Activated CD4-positive, alpha-beta memory T cell treated with anti-CD3 and anti-CD28 coated beads, Interleukin-2, amount 10 ng/mL, durations not matched to agents 7 days and 5 days (primary cell): ENCODE measurements at regions of chr19 and their contacts with region 1.

Region 1: GRCh38 chr19:35124098-35125060 is 8.8 kb downstream of the FXYD3 start:
- DNase-seq: peak; percentile 89
- H3K4me3 Mint-ChIP-seq: peak overlapping the region; percentile 61
- H3K27ac Mint-ChIP-seq: peak overlapping the region; percentile 17
- H3K4me1 Mint-ChIP-seq: peaks cover 19% of the 10 kb centered on the region
- H3K27me3 Mint-ChIP-seq: no peaks in the 10 kb centered on the region

Region 2: GRCh38 chr19:35135389-35135909 is 11.1 kb after region 1 on chr19:
- CTCF ChIA-PET with region 1: interaction called, 13 read pairs
- POLR2A ChIA-PET with region 1: interaction called, 4 read pairs
- DNase-seq: peak; percentile 72
- H3K4me3 Mint-ChIP-seq: no peak overlapping the region
- H3K27ac Mint-ChIP-seq: no peak overlapping the region
- H3K4me1 Mint-ChIP-seq: peaks cover 6% of the 10 kb centered on the region
- H3K27me3 Mint-ChIP-seq: peaks cover 17% of the 10 kb centered on the region